PC-9 (cell line): ENCODE measurements at regions of chr6 and their contacts with region 1.

Region 1: DNA sequence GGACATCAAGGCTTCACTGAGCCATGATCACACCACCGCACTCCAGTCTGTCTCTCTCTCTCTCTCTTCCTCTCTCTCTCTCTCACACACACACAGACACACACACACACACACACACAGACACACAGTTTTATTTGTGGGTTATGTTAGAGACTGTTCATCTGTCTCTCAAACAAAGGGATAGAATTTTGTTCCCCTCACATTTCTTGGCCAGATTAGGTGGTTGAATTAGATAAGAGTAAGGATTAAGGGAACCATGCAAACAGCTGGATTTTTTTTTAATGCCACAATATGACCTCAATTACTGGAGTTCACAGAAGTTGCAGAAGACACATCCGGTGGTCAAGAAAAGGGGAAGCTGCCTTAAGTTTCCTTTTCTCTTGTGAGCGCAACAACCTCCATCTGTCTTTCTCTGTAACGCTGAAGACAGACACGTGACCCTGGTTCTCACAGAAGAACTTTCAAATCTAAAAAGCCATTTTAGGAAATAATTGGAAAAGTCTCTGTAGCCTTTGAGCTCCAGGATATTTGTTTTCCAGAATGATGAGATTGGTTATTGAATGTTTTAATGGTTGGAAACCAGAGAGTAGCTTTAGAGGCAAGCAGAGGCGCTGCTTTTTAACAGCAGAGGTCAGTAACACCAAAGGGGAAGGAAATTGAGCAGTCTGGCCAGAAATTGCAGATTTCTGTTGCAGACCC is 33.0 kb upstream of the LGSN start:
- DNase-seq: peak in 1 of 2 experiments; percentile 39
- H3K4me3 ChIP-seq: no peak overlapping the region
- H3K27ac ChIP-seq: no peak overlapping the region
- H3K4me1 ChIP-seq: peaks cover 12% of the 10 kb centered on the region
- H3K27me3 ChIP-seq: no peaks in the 10 kb centered on the region
- CTCF ChIP-seq: peak; percentile 71

Region 2: GRCh38 chr6:63705707-63706106 is 353.0 kb after region 1 on chr6:
- CTCF ChIA-PET with region 1: no interaction called
- POLR2A ChIA-PET with region 1: no interaction called
- intact Hi-C with region 1: loop called (anchors 10 kb)
- DNase-seq: no peak
- H3K4me3 ChIP-seq: no peak overlapping the region
- H3K27ac ChIP-seq: no peak overlapping the region
- H3K4me1 ChIP-seq: no peaks in the 10 kb centered on the region
- H3K27me3 ChIP-seq: no peaks in the 10 kb centered on the region
- CTCF ChIP-seq: no peak

Region 3: GRCh38 chr6:63764318-63764916 is 411.7 kb after region 1 on chr6:
- CTCF ChIA-PET with region 1: interaction called, 22 read pairs
- POLR2A ChIA-PET with region 1: no interaction called
- intact Hi-C with region 1: loop called (anchors 1 kb)
- DNase-seq: no peak
- H3K4me3 ChIP-seq: no peak overlapping the region
- H3K27ac ChIP-seq: no peak overlapping the region
- H3K4me1 ChIP-seq: no peaks in the 10 kb centered on the region
- H3K27me3 ChIP-seq: no peaks in the 10 kb centered on the region
- CTCF ChIP-seq: peak; percentile 79

Region 4: DNA sequence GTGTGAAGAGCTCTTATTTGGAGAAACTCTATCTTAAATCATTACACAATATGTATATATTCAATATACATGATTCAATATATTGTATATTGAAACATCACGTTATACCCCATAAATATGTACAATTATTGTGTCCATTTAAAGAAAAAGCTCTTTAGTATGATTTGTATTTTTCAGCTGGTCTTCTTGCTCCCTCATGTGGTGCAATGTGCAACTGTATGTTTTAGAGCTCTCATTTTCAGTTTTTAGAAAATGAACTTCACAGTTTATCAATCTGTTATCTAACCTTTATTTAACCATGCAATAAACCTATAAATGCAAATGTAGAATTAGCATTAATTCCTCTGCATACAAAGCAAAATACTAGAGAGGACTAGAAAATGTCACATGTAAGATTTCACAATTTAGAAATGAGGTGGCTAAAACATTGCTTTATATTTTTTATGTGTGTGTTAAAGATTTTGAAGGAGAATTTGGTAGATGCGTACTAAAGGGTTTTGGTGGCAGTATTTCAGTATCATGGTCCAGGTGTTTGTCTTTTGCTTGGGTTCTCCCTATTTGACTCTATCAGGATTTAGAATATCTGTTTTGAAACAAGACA is 450.0 kb after region 1 on chr6:
- CTCF ChIA-PET with region 1: interaction called, 16 read pairs
- POLR2A ChIA-PET with region 1: no interaction called
- intact Hi-C with region 1: loop called (anchors 1 kb)
- DNase-seq: no peak
- H3K4me3 ChIP-seq: no peak overlapping the region
- H3K27ac ChIP-seq: no peak overlapping the region
- H3K4me1 ChIP-seq: peaks cover 37% of the 10 kb centered on the region
- H3K27me3 ChIP-seq: no peaks in the 10 kb centered on the region
- CTCF ChIP-seq: peak; percentile 80